ENCODE measurements at regions of chr14 and their contacts with region 1.

Region 1: GRCh38 chr14:100417466-100417865 is 94.3 kb downstream of the SLC25A47 start:
- DNase-seq: peak; percentile 87
- H3K4me3 ChIP-seq: no peak overlapping the region
- H3K27ac ChIP-seq: peak overlapping the region; percentile 65
- H3K27me3 ChIP-seq: no peaks in the 10 kb centered on the region
- CTCF ChIP-seq: peak; percentile 95

Region 2: GRCh38 chr14:100246826-100247428 is 170.5 kb before region 1 on chr14:
- CTCF ChIA-PET with region 1: interaction called, 12 read pairs
- POLR2A ChIA-PET with region 1: no interaction called
- DNase-seq: no peak
- H3K4me3 ChIP-seq: no peak overlapping the region
- H3K27ac ChIP-seq: no peak overlapping the region
- H3K27me3 ChIP-seq: no peaks in the 10 kb centered on the region
- CTCF ChIP-seq: peak; percentile 83

Region 3: DNA sequence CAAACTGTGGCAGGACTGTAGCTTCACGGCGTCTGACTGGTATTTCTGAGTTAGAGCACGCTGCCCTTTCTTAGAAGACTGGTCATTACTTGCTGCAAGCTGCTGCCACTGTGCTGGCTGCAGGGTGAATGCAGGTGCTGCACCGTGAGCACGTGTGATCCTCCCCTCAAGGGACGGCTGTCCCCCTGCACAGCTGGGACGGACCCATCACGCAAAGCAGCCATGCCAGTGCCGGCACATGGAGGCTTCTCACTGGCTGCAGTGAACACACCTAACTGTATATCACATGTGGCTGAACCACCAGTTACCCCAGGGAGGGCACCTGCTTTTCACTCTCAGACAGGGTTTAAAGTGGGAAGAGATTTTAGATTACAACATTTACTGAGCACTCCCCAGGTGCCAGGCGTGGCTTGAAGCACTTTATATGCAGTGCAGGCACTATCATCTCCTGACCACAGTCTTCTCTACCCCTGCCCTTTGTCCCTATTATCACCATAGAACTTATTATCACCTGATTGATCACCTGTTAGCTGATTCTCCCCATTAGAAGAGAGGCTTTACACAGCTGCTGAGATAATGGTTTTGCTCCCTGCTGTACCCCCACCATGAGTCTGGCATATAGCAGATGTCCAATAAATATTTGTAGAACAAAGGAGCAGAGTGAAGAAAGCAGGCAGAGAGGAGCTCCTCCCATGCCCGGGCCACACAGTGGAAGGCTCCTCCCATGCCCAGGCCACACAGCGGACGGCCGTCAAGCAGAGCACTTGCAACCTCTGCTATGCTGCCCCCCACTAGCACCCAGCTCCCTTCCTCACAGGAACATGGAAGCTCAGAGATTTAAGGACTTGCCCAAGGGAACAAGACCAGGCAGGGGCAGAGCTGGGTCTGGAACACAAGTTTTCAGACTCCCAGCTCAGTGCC is 68.4 kb before region 1 on chr14:
- CTCF ChIA-PET with region 1: no interaction called
- POLR2A ChIA-PET with region 1: no interaction called
- DNase-seq: no peak
- H3K4me3 ChIP-seq: no peak overlapping the region
- H3K27ac ChIP-seq: no peak overlapping the region
- H3K27me3 ChIP-seq: no peaks in the 10 kb centered on the region
- CTCF ChIP-seq: no peak

Region 4: GRCh38 chr14:100391724-100392123 is 25.7 kb before region 1 on chr14:
- CTCF ChIA-PET with region 1: interaction called, 19 read pairs
- POLR2A ChIA-PET with region 1: interaction called, 3 read pairs
- DNase-seq: no peak
- H3K4me3 ChIP-seq: no peak overlapping the region
- H3K27ac ChIP-seq: no peak overlapping the region
- H3K27me3 ChIP-seq: no peaks in the 10 kb centered on the region
- CTCF ChIP-seq: no peak

Region 5: GRCh38 chr14:100400115-100400514 is 17.4 kb before region 1 on chr14:
- CTCF ChIA-PET with region 1: interaction called, 13 read pairs
- POLR2A ChIA-PET with region 1: no interaction called
- DNase-seq: no peak
- H3K4me3 ChIP-seq: no peak overlapping the region
- H3K27ac ChIP-seq: no peak overlapping the region
- H3K27me3 ChIP-seq: no peaks in the 10 kb centered on the region
- CTCF ChIP-seq: no peak

Region 6: GRCh38 chr14:100428727-100429126 is 11.3 kb after region 1 on chr14:
- CTCF ChIA-PET with region 1: interaction called, 17 read pairs
- POLR2A ChIA-PET with region 1: no interaction called
- DNase-seq: no peak
- H3K4me3 ChIP-seq: no peak overlapping the region
- H3K27ac ChIP-seq: no peak overlapping the region
- H3K27me3 ChIP-seq: no peaks in the 10 kb centered on the region
- CTCF ChIP-seq: no peak

Region 7: GRCh38 chr14:100645192-100645990 is 227.9 kb after region 1 on chr14:
- CTCF ChIA-PET with region 1: interaction called, 59 read pairs
- POLR2A ChIA-PET with region 1: interaction called, 3 read pairs
- DNase-seq: peak; percentile 55
- H3K4me3 ChIP-seq: no peak overlapping the region
- H3K27ac ChIP-seq: no peak overlapping the region
- H3K27me3 ChIP-seq: peaks cover 22% of the 10 kb centered on the region
- CTCF ChIP-seq: peak; percentile 81

Region 8: GRCh38 chr14:100654814-100655740 is 237.6 kb after region 1 on chr14:
- CTCF ChIA-PET with region 1: interaction called, 16 read pairs
- POLR2A ChIA-PET with region 1: no interaction called
- DNase-seq: no peak
- H3K4me3 ChIP-seq: no peak overlapping the region
- H3K27ac ChIP-seq: no peak overlapping the region
- H3K27me3 ChIP-seq: peaks cover 30% of the 10 kb centered on the region
- CTCF ChIP-seq: peak; percentile 50